CD4-positive, alpha-beta T cell (primary cell): ENCODE measurements at regions of chr9 and their contacts with region 1.

Region 1: GRCh38 chr9:112224401-112225289 is 49.5 kb upstream of the SUSD1 start:
- DNase-seq: no peak
- ATAC-seq: no peak
- H3K4me3 ChIP-seq: no peak overlapping the region
- H3K4me3 Mint-ChIP-seq: no peak overlapping the region
- H3K27ac ChIP-seq: no peak overlapping the region
- H3K27ac Mint-ChIP-seq: no peak overlapping the region
- H3K4me1 ChIP-seq: no peaks in the 10 kb centered on the region
- H3K4me1 Mint-ChIP-seq: peaks cover 6% of the 10 kb centered on the region
- H3K27me3 ChIP-seq: no peaks in the 10 kb centered on the region
- H3K27me3 Mint-ChIP-seq: no peaks in the 10 kb centered on the region
- CTCF ChIP-seq: no peak

Region 2: GRCh38 chr9:112174218-112174964 is 50.3 kb before region 1 on chr9:
- CTCF ChIA-PET with region 1: no interaction called
- POLR2A ChIA-PET with region 1: interaction called, 3 read pairs
- intact Hi-C with region 1: loop called in 1 of 2 experiments (anchors 10 kb)
- DNase-seq: peak; percentile 44 to 92 (median 66)
- ATAC-seq: peak; percentile 66
- H3K4me3 ChIP-seq: peak overlapping the region; percentile 56
- H3K4me3 Mint-ChIP-seq: peak overlapping the region; percentile 89
- H3K27ac ChIP-seq: no peak overlapping the region
- H3K27ac Mint-ChIP-seq: peak overlapping the region; percentile 81
- H3K4me1 ChIP-seq: peaks cover 70% of the 10 kb centered on the region
- H3K4me1 Mint-ChIP-seq: peaks cover 79% of the 10 kb centered on the region
- H3K27me3 ChIP-seq: no peaks in the 10 kb centered on the region
- H3K27me3 Mint-ChIP-seq: no peaks in the 10 kb centered on the region
- CTCF ChIP-seq: no peak